PC-9 (cell line): ENCODE measurements at regions of chr1 and their contacts with region 1.

Region 1: DNA sequence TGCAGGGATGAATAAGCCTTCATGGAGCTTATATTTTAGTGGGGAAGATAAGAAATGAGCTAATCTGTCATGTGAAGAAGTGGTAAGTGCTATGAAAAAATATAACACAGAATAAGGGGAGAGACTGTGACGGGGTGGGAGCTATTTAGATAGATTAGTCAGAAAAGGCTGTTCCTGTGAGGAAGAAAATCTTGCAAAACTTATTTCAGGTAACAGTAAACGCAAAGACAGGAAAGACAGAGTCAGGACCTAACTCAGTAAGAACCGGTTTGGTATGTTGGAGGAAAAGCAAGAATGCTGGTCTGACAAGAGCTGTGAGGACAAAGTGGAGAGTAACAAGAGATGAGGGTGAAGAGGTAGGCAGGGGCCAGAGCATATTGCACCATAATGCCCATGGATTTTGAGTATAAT is 22.0 kb downstream of the GNAI3 start:
- DNase-seq: peak; percentile 45 to 99
- H3K4me3 ChIP-seq: peak overlapping the region; percentile 27; the same call in 1 of the 2 replicates
- H3K27ac ChIP-seq: peak overlapping the region; percentile 74
- H3K4me1 ChIP-seq: peaks cover 45% of the 10 kb centered on the region
- H3K27me3 ChIP-seq: no peaks in the 10 kb centered on the region
- CTCF ChIP-seq: no peak

Region 2: GRCh38 chr1:109516872-109517271 is 53.5 kb before region 1 on chr1:
- CTCF ChIA-PET with region 1: interaction called, 10 read pairs
- POLR2A ChIA-PET with region 1: no interaction called
- intact Hi-C with region 1: no loop called
- DNase-seq: no peak
- H3K4me3 ChIP-seq: no peak overlapping the region
- H3K27ac ChIP-seq: no peak overlapping the region
- H3K4me1 ChIP-seq: no peaks in the 10 kb centered on the region
- H3K27me3 ChIP-seq: peaks cover 17% of the 10 kb centered on the region; the same call in 1 of the 2 replicates
- CTCF ChIP-seq: no peak

Region 3: GRCh38 chr1:110292031-110292741 is 721.8 kb after region 1 on chr1:
- CTCF ChIA-PET with region 1: no interaction called
- POLR2A ChIA-PET with region 1: no interaction called
- intact Hi-C with region 1: no loop called
- DNase-seq: peak in 1 of 2 experiments; percentile 82
- H3K4me3 ChIP-seq: no peak overlapping the region
- H3K27ac ChIP-seq: peak overlapping the region; percentile 34
- H3K4me1 ChIP-seq: peaks cover 36% of the 10 kb centered on the region
- H3K27me3 ChIP-seq: no peaks in the 10 kb centered on the region
- CTCF ChIP-seq: no peak

Region 4: DNA sequence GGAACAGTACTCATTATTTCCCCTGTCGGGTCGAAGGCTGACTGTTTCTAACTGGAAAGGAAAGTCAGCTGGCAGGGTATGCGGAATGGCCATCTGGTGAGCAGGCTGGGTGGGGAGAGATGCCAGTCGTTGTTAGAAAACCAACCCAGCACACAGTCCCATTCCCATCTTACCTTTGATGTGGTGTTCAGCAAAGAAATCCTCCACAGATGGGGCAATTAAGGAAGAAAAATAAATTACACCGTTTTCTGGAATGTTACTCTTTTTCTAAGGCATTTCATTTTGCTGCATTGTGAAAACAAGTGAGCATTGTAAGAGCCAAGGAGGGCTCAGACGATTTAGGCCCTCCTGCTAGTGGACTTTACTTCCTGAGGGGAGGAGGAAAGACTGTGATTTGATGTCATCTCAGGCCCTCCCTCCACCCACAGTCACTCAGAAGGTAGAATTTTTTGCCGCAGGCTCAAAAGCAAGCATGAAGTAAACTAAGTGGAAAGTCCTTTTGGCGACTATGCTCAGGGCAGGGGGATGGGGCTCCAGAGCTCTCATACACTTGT is 820.3 kb after region 1 on chr1 and contains the start of gene SLC16A4:
- CTCF ChIA-PET with region 1: interaction called, 11 read pairs
- POLR2A ChIA-PET with region 1: no interaction called
- intact Hi-C with region 1: no loop called
- DNase-seq: peak in 1 of 2 experiments; percentile 42
- H3K4me3 ChIP-seq: no peak within 1 kb of the TSS
- H3K27ac ChIP-seq: no peak within 1 kb of the TSS
- H3K4me1 ChIP-seq: peaks cover 23% of the 10 kb centered on the region
- H3K27me3 ChIP-seq: no peaks in the 10 kb centered on the region
- CTCF ChIP-seq: no peak
- total RNA-seq, gene SLC16A4: 24.6 and 32.7 TPM in 2 replicates